ENCODE measurements at regions of chr1 and their contacts with region 1.

Region 1: GRCh38 chr1:205591522-205592351 is 40.1 kb downstream of the ELK4 start:
- DNase-seq: peak; percentile 89
- ATAC-seq: peak; percentile 95 to 96
- H3K4me3 ChIP-seq: peak overlapping the region; percentile 44
- H3K27ac ChIP-seq: peak overlapping the region; percentile 56
- H3K4me1 ChIP-seq: peaks cover 21% of the 10 kb centered on the region
- H3K27me3 ChIP-seq: no peaks in the 10 kb centered on the region
- CTCF ChIP-seq: peak; percentile 99

Region 2: DNA sequence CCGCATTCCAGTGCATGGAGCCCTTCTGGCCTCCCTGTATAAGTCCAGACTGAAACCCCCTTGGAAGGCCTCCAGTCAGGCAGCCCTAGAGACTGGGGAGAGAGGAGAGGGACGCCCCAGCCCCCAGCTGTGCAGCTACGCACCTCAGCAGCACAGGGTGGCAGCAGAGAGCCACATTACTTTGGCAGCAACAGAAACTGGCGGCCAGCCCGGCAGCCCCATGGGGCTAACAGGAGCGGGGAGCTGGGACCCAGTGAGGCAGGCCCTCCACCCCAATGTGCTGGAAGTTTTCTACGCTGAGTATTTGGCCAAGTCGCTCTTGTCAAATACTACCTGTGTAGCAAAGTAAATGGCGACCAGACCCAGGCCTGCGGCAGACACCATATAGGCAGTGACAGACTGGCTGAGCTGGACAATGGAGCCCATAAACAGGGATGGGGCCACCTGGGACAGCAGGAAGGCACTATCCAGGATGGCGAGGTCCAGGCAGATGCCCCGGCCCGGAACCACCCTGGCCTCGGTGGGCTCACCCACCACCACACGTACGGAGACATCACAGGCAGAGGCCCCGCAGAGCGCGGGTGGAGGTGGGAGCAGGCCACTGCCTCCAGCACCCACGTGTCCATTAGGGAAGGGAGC is 67.3 kb after region 1 on chr1:
- intact Hi-C with region 1: loop called (anchors 10 kb)
- DNase-seq: peak; percentile 84
- ATAC-seq: peak; percentile 87
- H3K4me3 ChIP-seq: no peak overlapping the region
- H3K27ac ChIP-seq: no peak overlapping the region
- H3K4me1 ChIP-seq: peaks cover 9% of the 10 kb centered on the region
- H3K27me3 ChIP-seq: no peaks in the 10 kb centered on the region
- CTCF ChIP-seq: peak; percentile 91